B cell (primary cell): ENCODE measurements at regions of chr3 and their contacts with region 1.

Region 1: DNA sequence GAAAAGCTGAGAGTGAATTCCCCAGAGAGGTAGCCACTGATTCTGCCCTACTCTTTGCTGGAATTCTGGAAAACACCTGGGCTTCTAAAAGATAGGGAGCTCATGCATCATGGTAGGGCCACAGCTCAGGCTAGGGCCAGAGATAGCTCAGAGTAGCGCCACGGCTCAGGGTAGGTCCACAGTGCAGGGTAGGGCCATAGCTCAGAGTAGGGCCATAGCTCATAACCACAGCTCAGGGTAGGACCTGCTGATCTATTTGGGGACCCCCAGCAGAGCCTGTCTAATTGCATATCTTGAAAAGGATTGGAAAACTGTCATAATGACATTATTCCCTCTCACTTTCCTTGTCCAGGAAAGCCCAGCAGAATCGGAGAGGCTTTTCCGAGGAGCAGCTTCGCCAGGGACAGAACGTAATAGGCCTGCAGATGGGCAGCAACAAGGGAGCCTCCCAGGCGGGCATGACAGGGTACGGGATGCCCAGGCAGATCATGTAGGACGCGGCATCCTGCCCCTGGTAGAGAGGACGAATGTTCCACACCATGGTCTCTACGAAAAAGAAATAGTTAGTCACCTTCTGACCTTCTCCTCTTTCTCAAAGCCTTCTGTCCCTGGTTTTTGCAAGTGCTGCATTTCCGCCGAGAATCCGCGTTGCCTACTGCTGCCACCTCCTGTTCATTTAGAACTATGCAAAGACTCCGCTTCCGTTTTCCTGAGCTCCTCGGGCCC is 14.5 kb downstream of the TAGLN3 start:
- DNase-seq: peak; percentile 66
- ATAC-seq: peak; percentile 77
- H3K4me3 ChIP-seq: no peak overlapping the region
- H3K4me3 Mint-ChIP-seq: no peak overlapping the region
- H3K27ac ChIP-seq: no peak overlapping the region
- H3K27ac Mint-ChIP-seq: no peak overlapping the region
- H3K4me1 ChIP-seq: peaks cover 0 to 3% of the 10 kb centered on the region in 2 donors
- H3K4me1 Mint-ChIP-seq: peaks cover 9% of the 10 kb centered on the region
- H3K27me3 ChIP-seq: no peaks in the 10 kb centered on the region
- H3K27me3 Mint-ChIP-seq: no peaks in the 10 kb centered on the region
- CTCF ChIP-seq: peak; percentile 81

Region 2: DNA sequence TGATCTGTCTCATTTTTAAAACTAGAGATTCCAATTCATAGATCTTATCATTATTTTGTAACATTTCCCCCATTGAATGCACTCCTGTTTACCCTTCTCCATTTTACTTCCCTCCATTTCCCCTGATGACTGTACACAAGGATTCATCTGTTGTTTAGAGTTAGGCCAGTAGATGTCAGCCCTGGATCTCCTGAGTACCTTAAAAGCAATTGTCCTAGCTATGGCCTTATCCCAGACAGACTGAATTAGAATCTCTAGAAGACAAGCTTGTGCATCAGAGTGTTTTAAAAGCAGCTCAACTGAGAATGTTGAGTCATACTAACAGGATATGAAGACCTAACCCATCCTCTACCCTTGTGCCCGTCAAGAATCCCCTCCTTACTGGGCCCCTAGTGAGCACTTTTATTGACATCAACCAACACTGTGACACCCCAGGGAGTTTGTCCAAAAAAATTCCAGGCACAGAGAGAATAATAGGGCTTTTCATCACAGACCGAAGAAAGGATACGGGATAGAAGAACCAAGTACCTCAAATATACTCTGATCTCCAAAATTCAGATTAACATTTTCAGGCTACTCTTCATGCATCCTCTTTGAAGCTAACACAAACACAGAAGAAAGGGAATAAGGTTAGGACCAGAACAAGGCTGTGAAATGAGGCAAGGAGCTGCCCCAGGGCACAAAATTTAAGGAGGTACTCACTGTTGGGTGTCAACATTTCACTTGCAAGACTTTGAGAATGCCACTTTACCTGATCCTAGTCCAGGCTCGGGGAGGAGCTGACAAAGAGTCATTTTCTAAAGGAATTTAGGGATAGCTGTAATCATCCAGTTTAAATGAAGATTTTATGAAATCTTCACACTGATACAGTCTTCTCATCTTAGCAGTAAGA is 435.2 kb before region 1 on chr3:
- CTCF ChIA-PET with region 1: interaction called, 11 read pairs
- POLR2A ChIA-PET with region 1: no interaction called
- intact Hi-C with region 1: no loop called
- DNase-seq: peak; percentile 47
- ATAC-seq: peak; percentile 86
- H3K4me3 ChIP-seq: no peak overlapping the region
- H3K4me3 Mint-ChIP-seq: no peak overlapping the region
- H3K27ac ChIP-seq: no peak overlapping the region
- H3K27ac Mint-ChIP-seq: peak overlapping the region; percentile 59
- H3K4me1 ChIP-seq: peaks cover 9 to 18% of the 10 kb centered on the region in 2 donors
- H3K4me1 Mint-ChIP-seq: peaks cover 31% of the 10 kb centered on the region
- H3K27me3 ChIP-seq: no peaks in the 10 kb centered on the region
- H3K27me3 Mint-ChIP-seq: no peaks in the 10 kb centered on the region
- CTCF ChIP-seq: peak; percentile 55

Region 3: GRCh38 chr3:111831840-111832239 is 181.4 kb before region 1 on chr3:
- CTCF ChIA-PET with region 1: no interaction called
- POLR2A ChIA-PET with region 1: no interaction called
- intact Hi-C with region 1: no loop called
- DNase-seq: no peak
- ATAC-seq: no peak
- H3K4me3 ChIP-seq: no peak overlapping the region
- H3K4me3 Mint-ChIP-seq: no peak overlapping the region
- H3K27ac ChIP-seq: no peak overlapping the region
- H3K27ac Mint-ChIP-seq: no peak overlapping the region
- H3K4me1 ChIP-seq: no peaks in the 10 kb centered on the region
- H3K4me1 Mint-ChIP-seq: no peaks in the 10 kb centered on the region
- H3K27me3 ChIP-seq: no peaks in the 10 kb centered on the region
- H3K27me3 Mint-ChIP-seq: peaks cover 5% of the 10 kb centered on the region
- CTCF ChIP-seq: no peak

Region 4: GRCh38 chr3:111978493-111979433 is 34.5 kb before region 1 on chr3 and contains the start of gene ABHD10:
- CTCF ChIA-PET with region 1: interaction called, 11 read pairs
- POLR2A ChIA-PET with region 1: no interaction called
- intact Hi-C with region 1: no loop called
- DNase-seq: peak; percentile 98
- ATAC-seq: peak; percentile 94
- H3K4me3 ChIP-seq: peak within 1 kb of the TSS; percentile 84 to 95 (median 84)
- H3K4me3 Mint-ChIP-seq: peak within 1 kb of the TSS; percentile 91
- H3K27ac ChIP-seq: peak within 1 kb of the TSS; percentile 72 to 75
- H3K27ac Mint-ChIP-seq: peak within 1 kb of the TSS; percentile 92
- H3K4me1 ChIP-seq: peaks cover 26 to 29% of the 10 kb centered on the region in 2 donors
- H3K4me1 Mint-ChIP-seq: peaks cover 38% of the 10 kb centered on the region
- H3K27me3 ChIP-seq: no peaks in the 10 kb centered on the region
- H3K27me3 Mint-ChIP-seq: no peaks in the 10 kb centered on the region
- CTCF ChIP-seq: no peak
- total RNA-seq, gene ABHD10: 40.1 and 43.2 TPM in 2 replicates

Region 5: DNA sequence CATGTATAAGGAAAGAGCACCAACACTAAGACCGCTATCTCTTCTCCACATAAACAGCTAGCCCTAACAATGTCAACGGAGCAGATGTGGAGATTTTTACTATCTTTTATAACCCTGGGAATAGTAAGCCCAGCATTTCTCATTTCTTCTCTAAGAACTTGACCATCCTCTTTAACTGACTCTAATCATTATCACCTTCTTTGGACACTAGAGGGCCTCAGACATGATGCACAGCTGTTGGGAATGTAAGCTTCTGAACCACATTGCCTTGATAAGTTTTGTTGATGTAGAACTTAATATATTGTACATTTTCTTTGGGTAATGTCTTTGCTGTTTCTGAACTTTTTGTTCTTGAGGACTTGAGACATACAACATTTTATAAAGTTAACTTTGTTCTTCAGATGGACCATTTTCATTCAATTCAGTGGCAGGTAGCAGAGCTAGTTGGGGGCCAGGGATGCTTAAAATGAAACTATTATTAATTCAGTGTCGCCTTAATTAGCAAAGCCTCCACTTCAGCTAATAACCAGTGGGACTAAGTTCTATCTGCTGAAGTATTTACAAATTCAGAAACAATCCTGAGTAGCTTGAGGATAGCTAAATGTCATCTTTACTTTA is 24.1 kb before region 1 on chr3:
- CTCF ChIA-PET with region 1: interaction called, 81 read pairs
- POLR2A ChIA-PET with region 1: no interaction called
- intact Hi-C with region 1: loop called (anchors 1 kb)
- DNase-seq: peak; percentile 55
- ATAC-seq: peak; percentile 76
- H3K4me3 ChIP-seq: no peak overlapping the region
- H3K4me3 Mint-ChIP-seq: no peak overlapping the region
- H3K27ac ChIP-seq: no peak overlapping the region
- H3K27ac Mint-ChIP-seq: no peak overlapping the region
- H3K4me1 ChIP-seq: no peaks in the 10 kb centered on the region
- H3K4me1 Mint-ChIP-seq: peaks cover 12% of the 10 kb centered on the region
- H3K27me3 ChIP-seq: no peaks in the 10 kb centered on the region
- H3K27me3 Mint-ChIP-seq: no peaks in the 10 kb centered on the region
- CTCF ChIP-seq: peak; percentile 80

Region 6: DNA sequence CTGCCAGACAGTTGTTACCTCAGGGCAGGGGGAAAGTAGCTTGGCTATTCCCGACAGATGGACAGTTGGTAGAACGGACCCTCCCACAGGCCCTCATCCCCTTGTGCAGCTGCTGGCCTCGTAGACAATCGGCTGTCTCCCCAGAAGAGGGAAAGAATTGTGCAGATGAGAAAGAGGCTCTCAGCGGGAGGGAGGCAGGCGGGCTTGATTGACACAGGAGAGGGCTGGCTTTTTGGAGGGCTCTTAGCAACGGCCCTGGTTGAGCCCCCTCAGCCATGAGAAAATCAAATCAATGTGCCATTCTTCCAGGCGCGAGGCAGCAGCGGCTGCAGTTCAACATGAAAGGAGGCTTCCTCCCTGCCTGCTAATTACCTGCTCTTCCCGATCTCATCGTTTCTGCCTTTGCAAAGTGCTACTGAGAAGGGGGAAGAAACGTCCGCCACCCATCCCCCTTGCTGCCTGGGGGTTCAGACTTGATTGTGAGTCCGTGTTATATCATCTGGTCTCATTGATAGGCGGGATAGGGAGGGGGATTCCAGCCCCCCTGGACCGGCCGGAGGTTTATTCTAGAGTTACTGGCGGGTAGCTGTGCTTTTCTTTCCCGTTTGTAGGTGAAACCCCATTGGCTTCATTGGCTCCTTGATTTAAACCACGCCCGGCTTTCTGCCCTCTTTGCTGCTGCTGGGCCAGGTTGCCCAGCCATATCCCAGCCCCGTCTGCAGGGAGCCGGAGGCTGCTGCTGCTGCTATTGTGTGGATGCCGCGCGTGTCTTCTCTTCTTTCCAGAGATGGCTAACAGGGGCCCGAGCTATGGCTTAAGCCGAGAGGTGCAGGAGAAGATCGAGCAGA is 14.4 kb before region 1 on chr3 and contains the start of gene TAGLN3:
- CTCF ChIA-PET with region 1: interaction called, 81 read pairs
- POLR2A ChIA-PET with region 1: no interaction called
- intact Hi-C with region 1: no loop called
- DNase-seq: peak; percentile 47
- ATAC-seq: peak; percentile 69
- H3K4me3 ChIP-seq: peak within 1 kb of the TSS; percentile 19 to 57 (median 52)
- H3K4me3 Mint-ChIP-seq: peak within 1 kb of the TSS; percentile 92
- H3K27ac ChIP-seq: no peak within 1 kb of the TSS
- H3K27ac Mint-ChIP-seq: no peak within 1 kb of the TSS
- H3K4me1 ChIP-seq: peaks cover 12 to 16% of the 10 kb centered on the region in 2 donors
- H3K4me1 Mint-ChIP-seq: peaks cover 16% of the 10 kb centered on the region
- H3K27me3 ChIP-seq: peaks cover 0 to 22% (median 6%) of the 10 kb centered on the region in 4 experiments
- H3K27me3 Mint-ChIP-seq: peaks cover 11% of the 10 kb centered on the region
- CTCF ChIP-seq: no peak
- total RNA-seq, gene TAGLN3: 0.44 TPM in 1 of 2 replicates, not detected in the other

Region 7: DNA sequence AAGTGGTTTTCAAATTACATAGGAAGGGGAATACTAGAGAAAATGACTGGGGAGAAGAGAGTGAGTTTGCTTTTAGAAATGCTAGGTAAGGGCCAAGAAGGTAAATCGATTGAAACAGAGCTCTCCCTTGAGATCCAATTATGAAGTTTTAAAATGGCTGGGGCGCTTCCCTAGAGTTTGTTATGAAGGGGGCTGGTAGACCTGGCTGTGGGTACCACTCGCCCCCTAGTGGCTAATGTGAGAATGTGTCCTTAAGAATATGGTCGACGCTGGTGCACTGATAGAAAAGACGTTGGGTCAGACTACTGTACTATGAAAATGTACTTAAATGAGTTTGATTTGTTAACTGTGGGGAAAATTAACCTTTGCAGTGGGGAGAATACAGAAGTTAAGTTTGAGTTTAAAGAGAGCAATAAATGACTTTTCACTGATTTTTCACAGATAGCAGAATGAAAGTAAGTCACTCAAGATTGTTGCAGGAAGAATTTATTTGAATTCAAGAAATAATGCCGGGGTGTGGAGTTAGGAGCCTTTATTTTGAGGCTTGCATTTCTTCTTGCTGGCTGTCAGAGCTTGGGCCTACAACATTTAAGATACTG is 30.5 kb after region 1 on chr3:
- CTCF ChIA-PET with region 1: interaction called, 10 read pairs
- POLR2A ChIA-PET with region 1: no interaction called
- intact Hi-C with region 1: no loop called
- DNase-seq: peak; percentile 76
- ATAC-seq: peak; percentile 92
- H3K4me3 ChIP-seq: no peak overlapping the region
- H3K4me3 Mint-ChIP-seq: no peak overlapping the region
- H3K27ac ChIP-seq: no peak overlapping the region
- H3K27ac Mint-ChIP-seq: no peak overlapping the region
- H3K4me1 ChIP-seq: peaks cover 7 to 8% of the 10 kb centered on the region in 2 donors
- H3K4me1 Mint-ChIP-seq: peaks cover 4% of the 10 kb centered on the region
- H3K27me3 ChIP-seq: no peaks in the 10 kb centered on the region
- H3K27me3 Mint-ChIP-seq: peaks cover 9% of the 10 kb centered on the region
- CTCF ChIP-seq: peak; percentile 93

Region 8: DNA sequence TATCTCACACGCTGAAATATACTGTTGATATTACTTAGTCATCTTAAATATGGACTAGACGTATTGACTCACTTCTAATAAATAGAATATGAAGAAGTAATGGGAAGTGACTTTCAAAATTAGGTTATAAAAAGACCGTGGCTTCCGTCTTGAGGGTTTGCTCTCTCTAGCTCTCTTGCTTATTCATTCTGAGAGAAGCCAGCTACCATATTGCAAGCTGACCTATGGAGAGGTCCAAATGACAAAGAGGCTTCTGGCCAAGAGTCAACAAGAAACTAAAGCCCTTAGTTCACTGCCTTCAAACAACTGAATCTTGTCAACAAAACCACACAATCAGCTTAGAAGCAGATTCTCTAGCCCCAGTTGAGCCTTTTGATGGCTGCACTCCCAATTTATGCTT is 234.7 kb after region 1 on chr3:
- CTCF ChIA-PET with region 1: no interaction called
- POLR2A ChIA-PET with region 1: no interaction called
- intact Hi-C with region 1: no loop called
- DNase-seq: no peak
- ATAC-seq: no peak
- H3K4me3 ChIP-seq: no peak overlapping the region
- H3K4me3 Mint-ChIP-seq: no peak overlapping the region
- H3K27ac ChIP-seq: no peak overlapping the region
- H3K27ac Mint-ChIP-seq: no peak overlapping the region
- H3K4me1 ChIP-seq: peaks cover 9% of the 10 kb centered on the region in 2 donors
- H3K4me1 Mint-ChIP-seq: peaks cover 15% of the 10 kb centered on the region
- H3K27me3 ChIP-seq: no peaks in the 10 kb centered on the region
- H3K27me3 Mint-ChIP-seq: no peaks in the 10 kb centered on the region
- CTCF ChIP-seq: no peak